GM10248 (cell line): ENCODE measurements at regions of chr16 and their contacts with region 1.

Region 1: DNA sequence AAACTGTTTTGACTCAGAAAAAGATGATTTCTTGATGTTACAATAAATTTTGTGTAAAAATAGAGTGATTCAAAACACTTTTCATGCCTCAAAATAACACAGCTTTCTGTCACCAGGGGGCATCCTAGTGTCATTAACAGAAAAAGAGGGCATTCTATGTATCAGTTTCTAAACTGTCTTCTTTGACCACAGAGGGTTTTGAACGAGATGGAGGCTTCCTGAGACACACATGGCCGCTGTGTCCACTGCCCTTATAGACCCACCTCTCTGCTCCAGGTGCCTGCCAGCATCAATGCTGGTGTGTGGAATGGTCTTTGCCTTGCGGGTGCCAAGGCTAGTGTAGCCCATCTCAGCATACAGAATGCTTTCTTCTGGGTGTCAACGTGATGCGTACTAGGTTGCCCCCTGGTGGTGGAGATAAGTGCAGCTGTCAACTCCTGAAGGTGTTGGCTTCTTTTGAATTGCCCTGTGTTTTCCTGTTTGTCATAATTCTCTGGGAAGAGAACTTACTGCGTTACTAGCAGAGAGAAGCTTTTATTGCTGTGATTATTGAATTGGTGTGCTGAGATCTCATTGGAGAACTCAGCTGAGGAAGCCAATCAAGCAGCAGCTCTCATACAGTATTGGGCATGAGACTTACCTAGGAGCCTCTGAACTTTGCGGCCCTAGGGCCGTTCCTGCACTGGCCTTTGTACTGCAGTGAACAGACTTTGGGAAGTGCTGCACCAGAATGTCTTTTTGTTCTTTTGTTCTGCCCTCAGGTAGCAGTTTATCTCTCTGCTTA is 38.6 kb downstream of the USP10 start:
- DNase-seq: peak; percentile 76
- CTCF ChIP-seq: peak; percentile 87

Region 2: GRCh38 chr16:84511180-84511824 is 227.1 kb before region 1 on chr16:
- CTCF ChIA-PET with region 1: interaction called, 18 read pairs
- POLR2A ChIA-PET with region 1: no interaction called
- DNase-seq: peak; percentile 67
- CTCF ChIP-seq: peak; percentile 79

Region 3: DNA sequence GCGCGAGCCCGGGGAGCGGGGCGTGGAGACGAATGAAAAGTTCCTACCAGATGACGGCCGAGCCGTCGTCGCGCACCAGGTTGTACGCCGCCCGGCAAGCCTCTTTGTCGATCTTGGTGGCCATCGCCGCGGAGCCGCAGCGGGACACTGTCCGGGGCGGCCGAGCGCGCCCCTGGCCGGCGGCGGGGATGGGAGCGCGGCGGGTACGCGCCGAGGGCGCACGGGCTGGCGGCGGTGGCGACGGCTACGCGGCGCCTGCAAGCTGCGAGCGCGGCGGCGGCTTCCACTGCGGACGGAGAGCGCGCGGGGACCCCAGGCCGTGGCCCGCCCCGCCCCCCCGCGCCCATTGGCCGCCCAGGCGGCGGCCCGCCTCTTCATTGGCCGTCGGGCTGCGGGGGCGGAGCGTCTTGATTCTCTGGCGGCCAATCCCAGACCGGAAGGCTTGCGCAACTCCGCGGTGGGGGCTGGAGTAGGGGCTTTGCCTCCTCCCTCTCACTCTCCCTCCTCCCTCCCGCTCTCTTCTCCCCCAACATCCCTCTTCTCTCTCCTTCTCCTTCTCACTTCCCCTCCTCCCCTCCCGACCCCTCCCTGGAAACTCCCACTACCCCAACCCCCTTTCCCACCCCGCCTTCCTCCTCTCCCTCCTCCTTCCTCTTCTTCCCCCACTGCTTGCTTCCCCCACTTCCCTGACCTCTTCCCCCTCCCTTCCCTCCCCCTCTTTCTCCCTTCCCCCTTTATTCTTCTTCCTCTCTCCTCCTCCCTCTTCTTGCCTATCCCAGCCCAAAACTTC is 120.5 kb before region 1 on chr16 and contains the start of gene COTL1:
- CTCF ChIA-PET with region 1: interaction called, 25 read pairs
- POLR2A ChIA-PET with region 1: no interaction called
- DNase-seq: peak; percentile 96
- CTCF ChIP-seq: no peak

Region 4: DNA sequence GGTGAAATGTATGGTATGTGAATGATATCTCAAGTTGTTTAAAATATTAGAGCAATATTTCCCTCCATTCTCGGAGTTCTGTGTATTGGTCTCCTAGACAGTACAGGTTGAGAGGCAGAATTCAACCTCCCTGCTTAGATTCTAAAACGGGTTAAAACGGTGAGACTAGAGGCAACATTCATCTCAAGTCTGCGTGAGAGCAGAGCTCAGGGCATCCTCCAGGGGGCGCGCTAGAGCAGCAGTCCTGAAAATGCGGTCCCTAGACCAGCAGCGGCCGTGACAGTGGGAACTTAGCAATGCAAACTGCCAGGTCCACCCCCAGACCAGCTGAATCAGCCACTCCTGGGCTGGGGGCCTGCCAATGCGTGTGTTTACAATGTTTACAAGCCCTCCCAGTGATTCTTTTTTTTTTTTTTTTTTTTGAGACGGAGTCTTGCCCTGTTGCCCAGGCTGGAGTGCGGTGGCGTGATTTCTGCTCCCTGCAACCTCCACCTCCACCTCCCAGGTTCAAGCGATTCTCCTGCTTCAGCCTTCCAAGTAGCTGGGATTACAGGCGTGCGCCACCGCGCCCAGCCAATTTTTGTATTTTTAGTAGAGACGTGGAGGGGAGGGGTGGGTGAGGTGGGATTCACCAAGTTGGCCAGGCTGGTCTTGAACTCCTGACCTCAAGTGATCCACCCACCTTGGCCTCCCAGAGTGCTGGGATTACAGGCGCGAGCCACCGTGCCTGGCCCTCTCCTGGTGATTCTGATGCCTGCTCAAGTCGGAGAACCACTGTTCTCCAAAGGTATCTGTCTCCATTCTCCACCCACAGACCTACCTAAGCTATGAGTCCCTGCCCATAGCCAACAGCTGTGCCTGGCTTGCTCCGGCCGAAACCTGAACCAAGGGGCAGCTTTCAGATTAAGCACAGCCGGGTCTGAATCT is 65.9 kb before region 1 on chr16:
- CTCF ChIA-PET with region 1: interaction called, 45 read pairs
- POLR2A ChIA-PET with region 1: no interaction called
- DNase-seq: peak; percentile 89
- CTCF ChIP-seq: peak; percentile 92

Region 5: GRCh38 chr16:84714028-84714427 is 24.4 kb before region 1 on chr16:
- CTCF ChIA-PET with region 1: interaction called, 202 read pairs
- POLR2A ChIA-PET with region 1: no interaction called
- DNase-seq: no peak
- CTCF ChIP-seq: no peak

Region 6: DNA sequence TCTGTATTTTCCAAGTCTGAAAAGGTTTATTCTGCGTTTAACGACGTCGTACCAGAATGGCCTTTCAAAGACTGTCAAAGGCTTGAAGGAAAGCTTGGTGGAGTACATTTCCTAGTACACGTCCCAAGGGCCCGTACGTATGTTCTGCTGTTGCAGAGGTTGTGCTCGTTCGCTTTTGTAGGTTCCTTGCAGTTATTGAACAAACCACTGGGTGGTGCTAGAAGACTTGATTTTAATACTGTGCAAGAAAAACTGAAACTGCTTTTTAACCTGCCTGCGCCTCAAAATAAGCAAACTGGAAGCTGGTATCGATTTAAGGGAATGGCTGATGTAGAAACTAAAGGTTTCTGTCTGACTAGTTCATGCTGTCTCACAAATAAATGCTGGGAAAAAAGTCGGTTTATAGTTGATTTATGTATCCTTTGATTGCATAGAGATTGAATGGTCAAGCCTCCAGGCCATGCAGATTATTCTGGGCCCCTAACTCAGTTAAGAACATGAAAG is 16.0 kb after region 1 on chr16:
- CTCF ChIA-PET with region 1: interaction called, 117 read pairs
- POLR2A ChIA-PET with region 1: no interaction called
- DNase-seq: peak; percentile 74
- CTCF ChIP-seq: peak; percentile 63

Region 7: DNA sequence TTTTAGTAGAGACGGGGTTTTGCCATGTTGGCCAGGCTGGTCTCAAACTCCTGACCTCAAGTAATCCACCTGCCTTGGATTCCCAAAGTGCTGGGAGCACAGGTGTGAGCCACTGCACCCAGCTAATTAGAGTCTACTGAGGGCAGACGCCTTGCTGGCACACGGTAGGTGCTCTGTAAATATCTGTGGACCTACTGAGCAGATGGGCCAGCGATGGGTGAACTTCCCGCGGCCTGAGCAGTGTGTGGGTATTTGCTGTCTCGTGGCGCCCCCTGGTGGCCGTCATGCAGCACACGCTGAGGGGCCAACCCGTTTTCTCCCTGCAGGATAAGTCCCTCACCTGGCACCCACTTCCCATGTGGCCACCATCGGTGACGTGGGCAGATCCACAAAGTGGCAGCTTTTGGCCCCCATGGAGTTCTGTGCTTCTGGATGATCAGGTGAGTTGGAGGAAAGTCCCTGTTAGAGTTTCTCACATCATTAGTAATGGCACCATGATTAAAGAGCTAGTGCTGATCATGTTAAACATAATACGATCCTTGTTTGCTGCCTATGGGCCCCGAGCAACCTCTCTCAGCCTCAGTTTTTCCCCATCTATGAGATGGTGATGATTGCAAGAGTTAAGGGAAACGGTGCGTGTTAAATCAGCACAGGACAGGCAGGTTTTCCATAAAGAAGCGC is 232.1 kb after region 1 on chr16:
- CTCF ChIA-PET with region 1: interaction called, 12 read pairs
- POLR2A ChIA-PET with region 1: no interaction called
- DNase-seq: peak; percentile 85
- CTCF ChIP-seq: peak; percentile 90